ENCODE measurements at regions of chr13 and their contacts with region 1.

Region 1: GRCh38 chr13:106917673-106918556 is 350.0 kb upstream of the ARGLU1 start:
- DNase-seq: peak; percentile 80 to 94
- ATAC-seq: peak; percentile 97
- H3K4me3 ChIP-seq: peak overlapping the region; percentile 13 to 48
- H3K27ac ChIP-seq: peak overlapping the region; percentile 67 to 70
- H3K4me1 ChIP-seq: no peaks in the 10 kb centered on the region
- H3K27me3 ChIP-seq: no peaks in the 10 kb centered on the region

Region 2: GRCh38 chr13:106373989-106374572 is 543.8 kb before region 1 on chr13:
- intact Hi-C with region 1: loop called in 1 of 2 experiments (anchors 5 kb)
- DNase-seq: no peak
- ATAC-seq: peak; percentile 28
- H3K4me3 ChIP-seq: no peak overlapping the region
- H3K27ac ChIP-seq: peak overlapping the region in 1 of 2 donors; percentile 8
- H3K4me1 ChIP-seq: peaks cover 0 to 3% of the 10 kb centered on the region in 2 donors
- H3K27me3 ChIP-seq: no peaks in the 10 kb centered on the region

Region 3: GRCh38 chr13:106464076-106464475 is 453.8 kb before region 1 on chr13:
- intact Hi-C with region 1: no loop called
- DNase-seq: no peak
- ATAC-seq: no peak
- H3K4me3 ChIP-seq: no peak overlapping the region
- H3K27ac ChIP-seq: no peak overlapping the region
- H3K4me1 ChIP-seq: no peaks in the 10 kb centered on the region
- H3K27me3 ChIP-seq: no peaks in the 10 kb centered on the region

Region 4: DNA sequence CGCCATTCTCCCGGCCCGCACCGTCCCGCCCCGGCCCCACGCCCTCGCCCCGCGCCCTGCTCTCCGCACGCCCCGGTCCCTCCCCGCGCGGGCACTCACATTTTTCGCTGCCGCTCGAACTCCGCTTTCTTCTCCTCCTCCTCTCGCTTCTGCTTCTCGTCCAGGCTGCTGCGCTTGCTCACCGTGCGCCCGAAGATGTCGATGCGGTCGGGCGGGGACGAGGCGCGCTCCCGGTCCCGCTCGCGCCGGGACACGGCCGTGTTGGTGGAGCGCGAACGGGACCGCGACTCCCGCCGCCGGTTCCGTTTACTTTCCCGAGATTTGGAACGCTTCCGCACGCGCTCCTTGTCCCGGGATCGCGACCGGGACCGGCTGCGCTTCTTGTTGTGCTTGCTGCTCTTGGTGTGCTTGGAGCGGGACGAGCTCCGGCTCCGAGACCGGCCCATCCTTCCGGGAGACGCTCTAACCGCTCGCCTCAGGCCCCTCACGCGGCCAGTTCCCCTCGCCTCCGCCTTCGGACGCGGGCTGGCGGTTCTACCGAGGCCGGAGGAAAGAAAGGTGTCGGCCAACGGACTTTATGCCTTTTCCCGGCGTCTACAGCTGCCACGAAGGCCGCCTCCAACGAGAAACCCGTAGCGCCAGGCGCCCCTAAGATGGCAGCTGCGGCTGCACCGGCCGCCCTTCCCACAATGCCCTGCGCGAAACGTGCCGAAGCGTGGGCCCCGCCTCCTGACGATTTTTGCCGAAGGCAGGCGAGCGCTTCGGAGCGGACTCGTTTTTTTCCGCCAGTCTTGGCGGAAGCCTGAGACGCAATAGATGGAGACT is 350.2 kb before region 1 on chr13 and contains the start of gene ARGLU1:
- intact Hi-C with region 1: loop called (anchors 5 to 10 kb)
- DNase-seq: peak; percentile 96 to 99
- ATAC-seq: peak; percentile 98
- H3K4me3 ChIP-seq: peak within 1 kb of the TSS; percentile 88 to 90
- H3K27ac ChIP-seq: peak within 1 kb of the TSS; percentile 58 to 93
- H3K4me1 ChIP-seq: peaks cover 0 to 12% of the 10 kb centered on the region in 2 donors
- H3K27me3 ChIP-seq: no peaks in the 10 kb centered on the region
- total RNA-seq, gene ARGLU1: 108 to 142 TPM

Region 5: DNA sequence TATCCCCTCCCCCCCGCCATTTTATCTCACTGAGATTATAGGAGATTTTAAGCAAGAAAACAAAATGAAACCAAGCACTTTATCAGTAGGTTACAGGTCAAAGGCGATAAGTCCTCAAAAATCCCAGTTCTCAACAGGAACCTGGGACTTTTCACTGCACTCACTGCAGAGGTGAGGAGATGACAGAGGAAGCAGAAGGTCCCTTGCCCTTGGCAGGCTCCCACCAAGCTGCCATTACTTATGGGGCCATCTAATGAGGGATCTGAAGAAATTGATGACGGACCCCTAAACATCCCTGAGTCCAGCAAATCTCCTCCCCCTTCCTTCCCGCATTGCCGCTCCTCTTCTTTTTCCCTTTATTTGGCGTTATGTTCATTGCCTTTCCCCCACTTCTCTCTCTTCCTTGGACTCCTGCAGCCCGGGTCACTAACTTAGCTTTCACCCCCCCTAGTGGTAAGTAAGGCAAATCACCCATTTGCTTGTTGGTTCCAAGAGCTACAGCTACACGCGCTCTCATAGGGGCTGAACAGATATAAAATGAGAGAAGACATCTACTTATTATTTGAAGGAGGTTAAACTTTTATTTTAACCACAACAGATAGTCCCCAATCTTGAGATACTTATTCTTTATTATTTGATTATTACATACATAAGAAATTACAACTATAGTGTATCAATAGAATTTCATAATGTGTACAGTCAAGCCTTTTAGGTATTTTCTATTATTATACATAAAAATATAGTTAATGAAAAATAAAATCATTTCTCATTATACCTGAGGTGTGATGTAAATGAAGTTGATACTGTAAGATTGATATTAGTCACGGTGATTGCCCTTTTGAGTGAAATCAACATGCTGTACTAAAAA is 298.0 kb before region 1 on chr13:
- intact Hi-C with region 1: loop called in 1 of 2 experiments (anchors 5 kb)
- DNase-seq: no peak
- ATAC-seq: peak; percentile 91
- H3K4me3 ChIP-seq: no peak overlapping the region
- H3K27ac ChIP-seq: no peak overlapping the region
- H3K4me1 ChIP-seq: no peaks in the 10 kb centered on the region
- H3K27me3 ChIP-seq: no peaks in the 10 kb centered on the region

Region 6: GRCh38 chr13:106867249-106867648 is 50.7 kb before region 1 on chr13:
- intact Hi-C with region 1: loop called in 1 of 2 experiments (anchors 5 kb)
- DNase-seq: no peak
- ATAC-seq: no peak
- H3K4me3 ChIP-seq: peak overlapping the region; percentile 47 to 72
- H3K27ac ChIP-seq: no peak overlapping the region
- H3K4me1 ChIP-seq: no peaks in the 10 kb centered on the region
- H3K27me3 ChIP-seq: no peaks in the 10 kb centered on the region

Region 7: DNA sequence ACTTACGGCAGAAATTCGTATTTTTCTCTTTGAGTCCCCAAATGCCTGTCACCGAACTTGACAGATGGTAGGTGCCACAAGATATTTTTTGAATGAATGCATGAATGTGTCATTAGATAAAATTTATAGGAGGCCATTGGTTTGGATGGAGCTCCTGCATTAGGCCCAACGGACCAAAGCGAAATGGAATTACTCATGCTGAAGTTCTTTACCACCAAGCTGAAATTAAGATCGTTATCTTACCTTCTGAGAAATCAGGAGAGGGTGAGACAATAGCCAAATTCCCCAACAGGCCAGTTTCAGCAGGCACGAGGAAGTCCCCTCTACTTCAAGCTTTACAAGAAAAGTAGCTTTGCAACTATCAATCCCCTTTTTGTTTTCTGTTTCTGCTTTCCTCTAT is 102.5 kb after region 1 on chr13:
- intact Hi-C with region 1: loop called in 1 of 2 experiments (anchors 5 kb)
- DNase-seq: no peak
- ATAC-seq: no peak
- H3K4me3 ChIP-seq: no peak overlapping the region
- H3K27ac ChIP-seq: no peak overlapping the region
- H3K4me1 ChIP-seq: no peaks in the 10 kb centered on the region
- H3K27me3 ChIP-seq: no peaks in the 10 kb centered on the region

Region 8: DNA sequence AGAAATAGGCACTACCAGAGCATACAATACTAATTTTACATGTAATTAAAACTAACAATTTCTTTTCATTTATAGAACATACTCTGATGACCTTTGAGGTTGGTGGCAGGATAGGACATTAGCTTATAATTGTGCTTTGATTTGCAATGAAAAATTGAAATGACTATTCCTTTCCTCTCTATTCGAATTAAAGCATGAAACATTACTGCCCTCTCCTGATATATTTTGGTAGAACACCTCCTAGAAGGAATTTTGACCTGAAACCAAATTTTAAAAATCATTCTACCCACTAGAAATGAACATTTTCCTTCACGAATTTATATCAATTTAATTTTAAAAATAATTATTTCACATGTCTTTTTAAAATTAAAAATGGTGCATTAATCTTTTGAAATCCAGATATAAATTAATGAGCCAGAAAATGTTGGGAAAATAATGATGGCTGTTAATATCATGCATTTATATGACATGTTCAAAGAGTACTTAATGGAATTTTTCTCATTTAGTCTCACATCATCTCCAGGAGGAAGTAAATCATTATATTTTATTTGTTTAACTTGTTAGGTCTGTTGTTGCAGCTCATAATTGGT is 206.3 kb after region 1 on chr13:
- intact Hi-C with region 1: loop called (anchors 5 kb)
- DNase-seq: no peak
- ATAC-seq: no peak
- H3K4me3 ChIP-seq: no peak overlapping the region
- H3K27ac ChIP-seq: no peak overlapping the region
- H3K4me1 ChIP-seq: no peaks in the 10 kb centered on the region
- H3K27me3 ChIP-seq: no peaks in the 10 kb centered on the region

Region 9: GRCh38 chr13:108680011-108680410 is 1762.1 kb after region 1 on chr13:
- intact Hi-C with region 1: no loop called
- DNase-seq: no peak
- ATAC-seq: no peak
- H3K4me3 ChIP-seq: no peak overlapping the region
- H3K27ac ChIP-seq: no peak overlapping the region
- H3K4me1 ChIP-seq: no peaks in the 10 kb centered on the region
- H3K27me3 ChIP-seq: no peaks in the 10 kb centered on the region

Measured in aorta (tissue), 5 donors.